CD4-positive, alpha-beta memory T cell (primary cell): ENCODE measurements at regions of chr2 and their contacts with region 1.

Region 1: DNA sequence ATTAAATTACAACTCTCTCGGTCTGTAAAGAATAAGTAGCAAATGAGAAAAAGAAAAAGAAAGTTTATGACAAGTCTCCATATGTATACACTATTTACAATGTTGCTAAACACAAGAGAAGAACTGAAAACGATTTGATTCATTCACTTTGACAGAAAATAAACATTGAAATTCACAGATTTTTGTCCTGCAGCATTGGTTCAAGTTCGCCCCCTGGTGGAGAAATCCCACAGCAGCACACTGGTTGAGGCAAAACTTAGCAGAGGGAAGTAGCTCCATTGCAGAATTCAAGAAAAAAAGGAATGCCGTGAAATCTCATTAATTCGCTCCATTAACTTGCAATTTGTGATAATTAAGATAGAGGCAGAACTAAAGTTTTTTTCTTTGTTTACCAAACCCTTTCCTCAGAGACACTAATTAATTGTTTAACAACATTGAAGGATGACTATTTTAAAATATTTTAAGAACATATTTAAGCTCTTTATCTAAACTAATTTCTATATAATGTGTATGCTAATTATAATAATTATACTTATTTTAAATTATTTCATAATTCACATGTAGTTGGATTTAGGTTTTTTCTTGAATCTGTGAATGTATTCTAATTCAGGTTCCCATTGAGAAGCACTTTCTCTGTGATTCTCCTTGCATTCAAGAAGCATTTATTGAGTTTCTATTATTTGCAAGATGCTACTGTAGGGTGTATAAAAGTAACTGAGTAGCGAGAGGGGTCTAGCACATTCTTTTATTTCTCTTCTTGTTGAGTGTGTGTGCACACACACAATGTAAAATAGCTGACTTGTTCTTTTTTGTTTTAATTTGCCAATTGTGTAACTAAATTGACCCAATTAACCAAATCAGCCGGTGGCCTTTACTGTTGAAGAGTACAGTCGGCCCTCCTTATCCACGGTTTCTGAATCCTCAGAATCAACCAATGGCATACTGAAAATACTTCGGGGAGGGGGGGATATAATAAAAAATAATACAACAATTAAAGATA is 74.1 kb downstream of the COL4A3 start:
- DNase-seq: peak; percentile 38 to 48 (median 40)
- H3K4me3 ChIP-seq: no peak overlapping the region
- H3K4me3 Mint-ChIP-seq: no peak overlapping the region
- H3K27ac ChIP-seq: no peak overlapping the region
- H3K27ac Mint-ChIP-seq: no peak overlapping the region
- H3K4me1 ChIP-seq: no peaks in the 10 kb centered on the region
- H3K4me1 Mint-ChIP-seq: no peaks in the 10 kb centered on the region
- H3K27me3 ChIP-seq: no peaks in the 10 kb centered on the region
- H3K27me3 Mint-ChIP-seq: peaks cover 9 to 15% of the 10 kb centered on the region in 2 donors

Region 2: GRCh38 chr2:225668606-225669266 is 1569.8 kb before region 1 on chr2:
- CTCF ChIA-PET with region 1: interaction called, 9 read pairs
- POLR2A ChIA-PET with region 1: no interaction called
- intact Hi-C with region 1: loop called (anchors 1 kb)
- DNase-seq: peak; percentile 38 to 50 (median 43)
- H3K4me3 ChIP-seq: no peak overlapping the region
- H3K4me3 Mint-ChIP-seq: no peak overlapping the region
- H3K27ac ChIP-seq: no peak overlapping the region
- H3K27ac Mint-ChIP-seq: no peak overlapping the region
- H3K4me1 ChIP-seq: no peaks in the 10 kb centered on the region
- H3K4me1 Mint-ChIP-seq: no peaks in the 10 kb centered on the region
- H3K27me3 ChIP-seq: no peaks in the 10 kb centered on the region
- H3K27me3 Mint-ChIP-seq: peaks cover 0 to 7% of the 10 kb centered on the region in 2 donors

Region 3: DNA sequence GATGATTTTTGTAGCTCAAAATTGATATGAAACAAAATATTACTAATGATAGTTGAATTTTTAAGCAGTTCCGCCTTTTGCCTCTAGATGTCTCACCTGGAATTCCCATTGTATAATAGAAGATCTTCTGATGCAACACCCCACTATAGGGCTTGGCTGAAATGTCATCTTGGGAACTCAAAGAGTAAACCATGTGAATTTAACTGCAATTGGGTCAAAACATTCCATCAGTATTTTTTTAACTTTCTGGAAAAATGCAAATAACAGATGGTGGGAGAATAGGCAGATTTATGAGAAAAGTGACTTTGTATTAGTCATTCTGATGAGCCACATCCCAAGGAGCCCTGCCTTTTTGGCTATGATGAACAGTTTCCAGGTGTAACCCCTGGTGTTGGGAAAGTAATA is 1349.1 kb before region 1 on chr2:
- CTCF ChIA-PET with region 1: interaction called, 3 read pairs
- POLR2A ChIA-PET with region 1: no interaction called
- intact Hi-C with region 1: loop called (anchors 1 kb)
- DNase-seq: peak in 4 of 5 donors; percentile 6 to 21 (median 8)
- H3K4me3 ChIP-seq: no peak overlapping the region
- H3K4me3 Mint-ChIP-seq: no peak overlapping the region
- H3K27ac ChIP-seq: no peak overlapping the region
- H3K27ac Mint-ChIP-seq: no peak overlapping the region
- H3K4me1 ChIP-seq: no peaks in the 10 kb centered on the region
- H3K4me1 Mint-ChIP-seq: no peaks in the 10 kb centered on the region
- H3K27me3 ChIP-seq: no peaks in the 10 kb centered on the region
- H3K27me3 Mint-ChIP-seq: peaks cover 2 to 6% of the 10 kb centered on the region in 2 donors

Region 4: GRCh38 chr2:226835796-226836547 is 402.6 kb before region 1 on chr2 and contains the start of gene RHBDD1:
- CTCF ChIA-PET with region 1: no interaction called
- POLR2A ChIA-PET with region 1: no interaction called
- intact Hi-C with region 1: no loop called
- DNase-seq: peak; percentile 93 to 95 (median 95)
- H3K4me3 ChIP-seq: peak within 1 kb of the TSS; percentile 64 to 94
- H3K4me3 Mint-ChIP-seq: peak within 1 kb of the TSS; percentile 91 to 99 (median 97)
- H3K27ac ChIP-seq: peak within 1 kb of the TSS; percentile 98
- H3K27ac Mint-ChIP-seq: peak within 1 kb of the TSS; percentile 97 to 100 (median 100)
- H3K4me1 ChIP-seq: peaks cover 63% of the 10 kb centered on the region
- H3K4me1 Mint-ChIP-seq: peaks cover 33 to 71% (median 50%) of the 10 kb centered on the region in 4 donors
- H3K27me3 ChIP-seq: no peaks in the 10 kb centered on the region
- H3K27me3 Mint-ChIP-seq: no peaks in the 10 kb centered on the region
- total RNA-seq, gene RHBDD1: 54.6 to 66.0 TPM

Region 5: DNA sequence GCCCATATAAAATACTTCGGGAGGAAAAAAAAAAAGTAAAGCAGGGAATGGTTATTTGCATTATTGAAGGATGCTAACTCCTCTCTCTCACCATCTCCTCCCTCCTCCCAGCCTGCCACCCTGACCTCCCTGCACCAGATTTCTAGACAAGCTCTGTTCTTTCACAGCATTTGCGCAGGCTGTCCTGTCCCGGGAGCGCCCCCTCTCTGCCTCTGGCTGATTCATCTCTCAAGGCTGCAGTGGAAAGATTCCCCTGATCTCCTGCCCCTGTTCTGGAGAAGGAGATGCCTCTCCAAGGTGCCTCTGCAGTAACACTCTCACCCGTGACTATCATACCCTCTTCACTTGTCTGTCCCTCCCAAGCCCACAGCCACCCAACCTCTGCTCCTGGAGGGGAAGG is 113.0 kb before region 1 on chr2:
- CTCF ChIA-PET with region 1: interaction called, 3 read pairs
- POLR2A ChIA-PET with region 1: no interaction called
- intact Hi-C with region 1: loop called (anchors 5 kb)
- DNase-seq: no peak
- H3K4me3 ChIP-seq: no peak overlapping the region
- H3K4me3 Mint-ChIP-seq: no peak overlapping the region
- H3K27ac ChIP-seq: no peak overlapping the region
- H3K27ac Mint-ChIP-seq: no peak overlapping the region
- H3K4me1 ChIP-seq: no peaks in the 10 kb centered on the region
- H3K4me1 Mint-ChIP-seq: no peaks in the 10 kb centered on the region
- H3K27me3 ChIP-seq: no peaks in the 10 kb centered on the region
- H3K27me3 Mint-ChIP-seq: peaks cover 12 to 14% of the 10 kb centered on the region in 2 donors

Region 6: DNA sequence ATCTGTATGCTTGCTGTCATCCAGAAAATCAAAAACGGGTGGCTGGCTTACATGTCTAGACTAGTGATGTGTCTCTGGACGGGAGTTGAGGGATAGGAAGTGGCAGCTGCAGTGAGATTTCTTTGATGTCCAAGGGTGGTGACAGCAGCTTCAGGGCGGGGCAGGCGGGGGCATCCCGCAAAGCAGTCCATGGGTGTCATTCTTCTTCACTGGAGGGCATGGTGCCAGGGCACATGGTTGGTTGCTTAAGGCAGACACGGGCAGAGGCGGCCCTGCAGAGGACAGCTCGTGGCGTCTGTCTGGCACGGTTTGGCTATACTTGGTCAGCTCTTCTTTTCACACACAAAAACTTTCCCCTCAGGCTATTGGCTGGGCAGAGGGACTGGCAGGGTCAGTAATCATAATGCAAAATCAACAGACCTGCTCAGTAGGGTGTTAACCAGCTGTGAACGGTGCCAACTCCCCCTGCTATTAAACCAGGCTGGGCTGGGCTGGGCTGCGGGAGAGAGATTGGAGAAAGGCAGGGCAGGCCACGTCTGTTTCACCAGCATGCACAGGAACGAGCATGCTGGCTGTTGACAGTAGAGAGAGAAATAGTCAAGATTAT is 10.4 kb before region 1 on chr2:
- CTCF ChIA-PET with region 1: interaction called, 11 read pairs
- POLR2A ChIA-PET with region 1: no interaction called
- intact Hi-C with region 1: no loop called
- DNase-seq: no peak
- H3K4me3 ChIP-seq: no peak overlapping the region
- H3K4me3 Mint-ChIP-seq: no peak overlapping the region
- H3K27ac ChIP-seq: no peak overlapping the region
- H3K27ac Mint-ChIP-seq: no peak overlapping the region
- H3K4me1 ChIP-seq: no peaks in the 10 kb centered on the region
- H3K4me1 Mint-ChIP-seq: no peaks in the 10 kb centered on the region
- H3K27me3 ChIP-seq: no peaks in the 10 kb centered on the region
- H3K27me3 Mint-ChIP-seq: peaks cover 7 to 16% of the 10 kb centered on the region in 2 donors

Region 7: GRCh38 chr2:227248876-227249275 is 10.3 kb after region 1 on chr2:
- CTCF ChIA-PET with region 1: interaction called, 25 read pairs
- POLR2A ChIA-PET with region 1: no interaction called
- intact Hi-C with region 1: no loop called
- DNase-seq: no peak
- H3K4me3 ChIP-seq: no peak overlapping the region
- H3K4me3 Mint-ChIP-seq: no peak overlapping the region
- H3K27ac ChIP-seq: no peak overlapping the region
- H3K27ac Mint-ChIP-seq: no peak overlapping the region
- H3K4me1 ChIP-seq: no peaks in the 10 kb centered on the region
- H3K4me1 Mint-ChIP-seq: no peaks in the 10 kb centered on the region
- H3K27me3 ChIP-seq: no peaks in the 10 kb centered on the region
- H3K27me3 Mint-ChIP-seq: peaks cover 5 to 9% of the 10 kb centered on the region in 2 donors

Region 8: DNA sequence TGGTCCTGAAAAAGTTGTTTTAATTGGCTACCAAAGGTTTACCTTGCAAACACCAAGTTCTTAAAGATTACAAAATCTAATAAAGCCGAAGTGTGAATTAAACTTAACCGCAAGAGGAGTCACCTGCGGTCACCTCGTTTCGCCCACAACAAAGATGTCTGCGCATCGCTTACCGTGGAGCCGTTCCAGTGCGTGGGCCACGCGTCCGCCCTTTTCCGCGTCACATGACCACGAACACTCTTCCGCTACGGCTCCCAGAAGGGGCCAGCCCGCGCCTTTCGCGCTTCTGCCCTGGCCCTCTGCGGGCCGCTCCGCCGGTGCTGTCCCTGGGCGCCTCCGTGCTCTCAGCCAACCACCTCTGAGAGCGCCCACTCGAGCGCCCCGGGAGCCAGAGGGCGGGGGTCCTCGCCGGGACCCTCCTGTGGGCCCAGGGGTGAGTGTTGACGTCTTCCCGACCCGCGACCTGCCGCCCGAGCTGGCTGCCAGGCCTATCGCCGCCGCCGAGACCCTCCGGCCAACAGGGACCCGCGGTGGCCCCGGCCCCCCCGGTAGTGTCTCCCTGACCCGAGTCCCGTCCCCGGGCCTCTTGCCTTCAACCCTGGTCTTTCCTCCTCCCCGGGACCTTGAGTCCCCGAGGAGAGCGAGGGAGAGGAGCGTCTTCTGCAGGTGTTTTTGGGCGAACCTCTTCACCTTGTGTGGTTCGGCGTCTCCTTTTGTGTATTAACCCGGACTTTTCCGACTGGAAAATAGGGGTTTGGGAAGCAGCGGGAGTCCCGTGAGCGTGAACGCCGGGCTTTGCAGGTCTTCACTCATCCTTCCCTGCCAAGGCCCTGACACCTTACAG is 86.7 kb after region 1 on chr2 and contains the start of gene MFF:
- CTCF ChIA-PET with region 1: no interaction called
- POLR2A ChIA-PET with region 1: no interaction called
- intact Hi-C with region 1: loop called (anchors 5 kb)
- DNase-seq: peak; percentile 92 to 96 (median 93)
- H3K4me3 ChIP-seq: peak within 1 kb of the TSS; percentile 85 to 91
- H3K4me3 Mint-ChIP-seq: peak within 1 kb of the TSS; percentile 95 to 97 (median 96)
- H3K27ac ChIP-seq: peak within 1 kb of the TSS; percentile 84
- H3K27ac Mint-ChIP-seq: peak within 1 kb of the TSS; percentile 95 to 98 (median 96)
- H3K4me1 ChIP-seq: peaks cover 30% of the 10 kb centered on the region
- H3K4me1 Mint-ChIP-seq: peaks cover 21 to 59% (median 36%) of the 10 kb centered on the region in 4 donors
- H3K27me3 ChIP-seq: no peaks in the 10 kb centered on the region
- H3K27me3 Mint-ChIP-seq: no peaks in the 10 kb centered on the region
- total RNA-seq, gene MFF: 58.0 to 64.3 TPM